OCI-LY7 (cell line): ENCODE measurements at regions of chr4 and their contacts with region 1.

Region 1: DNA sequence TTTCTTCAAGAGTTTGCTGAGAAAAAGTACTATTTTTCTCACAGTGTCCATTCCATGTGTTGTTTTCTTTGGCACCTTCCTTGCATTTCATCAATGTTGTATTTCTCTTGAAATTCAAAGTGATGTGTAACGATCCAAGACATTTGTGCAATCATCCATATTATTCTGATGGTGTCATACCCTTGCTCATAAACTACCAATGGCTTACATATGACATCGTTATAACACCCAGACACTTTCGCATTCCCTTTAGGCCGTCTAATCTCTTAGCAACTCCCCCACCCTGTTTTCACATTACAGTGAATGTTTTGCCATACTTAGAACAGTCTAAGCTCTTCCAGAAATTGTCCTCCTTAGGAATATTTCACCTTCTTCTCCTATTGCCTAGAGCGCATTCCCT is 1779.0 kb downstream of the PCDH7 start:
- DNase-seq: no peak
- H3K4me3 ChIP-seq: no peak overlapping the region
- H3K27ac ChIP-seq: no peak overlapping the region
- H3K4me1 ChIP-seq: peaks cover 6% of the 10 kb centered on the region
- CTCF ChIP-seq: no peak

Region 2: GRCh38 chr4:32340591-32340990 is 158.6 kb before region 1 on chr4:
- CTCF ChIA-PET with region 1: no interaction called
- POLR2A ChIA-PET with region 1: no interaction called
- intact Hi-C with region 1: no loop called
- DNase-seq: peak; percentile 4
- H3K4me3 ChIP-seq: no peak overlapping the region
- H3K27ac ChIP-seq: no peak overlapping the region
- H3K4me1 ChIP-seq: no peaks in the 10 kb centered on the region
- CTCF ChIP-seq: peak; percentile 60

Region 3: DNA sequence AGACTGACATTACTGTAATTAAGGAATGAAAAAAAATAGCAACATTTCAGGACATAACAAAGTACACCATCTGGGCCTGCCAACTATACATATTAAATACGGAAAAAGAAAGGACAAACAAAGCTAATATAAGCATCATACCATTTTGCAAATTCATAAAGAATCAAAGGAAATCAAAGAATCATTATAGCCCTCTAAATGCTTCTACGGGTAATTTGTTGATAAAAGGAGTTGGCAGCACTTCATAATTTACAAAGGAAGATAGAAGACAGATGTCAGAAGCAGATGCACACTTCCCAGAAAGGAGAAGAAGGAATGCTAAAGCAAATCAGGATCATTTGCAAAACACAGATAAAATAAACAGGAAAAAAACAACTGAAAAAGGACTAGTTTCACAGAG is 21.7 kb before region 1 on chr4:
- CTCF ChIA-PET with region 1: no interaction called
- POLR2A ChIA-PET with region 1: interaction called, 3 read pairs
- intact Hi-C with region 1: loop called (anchors 1 kb)
- DNase-seq: no peak
- H3K4me3 ChIP-seq: no peak overlapping the region
- H3K27ac ChIP-seq: no peak overlapping the region
- H3K4me1 ChIP-seq: no peaks in the 10 kb centered on the region
- CTCF ChIP-seq: no peak